Activated T-helper 1 cell treated with anti-CD3 and anti-CD28 coated beads, Interleukin-12 subunit alpha, Interleukin-12 subunit beta, Interleukin-2, Interleukin-4 antibody, amounts not matched to agents 30 ng/mL and 10 ng/mL and 1 ng/mL, durations not matched to agents 14 hours and 24 hours and 36 hours (primary cell): ENCODE measurements at regions of chrX and their contacts with region 1.

Region 1: DNA sequence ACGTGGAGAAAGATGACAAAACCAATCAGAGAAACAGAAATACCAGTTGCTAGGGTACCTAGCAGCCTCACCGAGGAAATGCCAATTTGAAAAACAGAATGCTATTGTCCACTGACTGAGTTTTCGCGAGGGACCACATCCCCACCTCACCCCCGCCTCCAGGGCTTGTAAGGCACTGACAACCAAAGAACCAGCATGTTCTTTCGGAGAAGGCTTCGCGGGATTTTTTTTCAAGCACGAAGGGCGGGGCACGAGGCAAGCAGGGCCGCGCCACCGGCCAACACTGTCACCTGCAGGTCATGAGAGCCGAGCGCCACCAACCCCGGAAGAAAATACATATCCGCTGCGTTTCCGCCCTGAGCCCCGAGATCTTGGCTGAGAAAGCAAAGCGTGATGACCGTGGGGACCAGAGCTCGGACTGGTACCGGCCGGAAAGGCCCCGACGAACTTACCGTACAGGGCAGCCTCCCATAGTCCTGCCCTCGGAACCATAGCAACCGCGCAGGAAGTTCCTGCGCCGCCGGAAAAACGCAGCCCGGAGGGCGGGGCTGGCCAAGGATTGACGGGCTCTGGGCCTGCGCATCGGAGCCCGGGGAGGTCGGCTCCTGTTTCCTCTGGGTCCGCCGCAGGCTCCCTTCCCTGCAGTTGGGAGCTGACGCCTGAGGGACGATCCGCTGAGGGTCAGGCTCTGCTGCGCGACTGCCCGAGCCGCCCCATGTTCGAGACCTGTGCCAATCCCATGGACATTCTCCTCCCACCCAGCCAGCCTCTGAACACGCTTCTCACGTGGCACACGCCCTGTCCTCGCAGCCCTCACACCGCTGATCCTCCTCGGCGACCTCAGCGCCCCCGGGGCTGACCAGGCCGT is 59.2 kb upstream of the PAGE5 start:
- DNase-seq: peak; percentile 83
- H3K4me3 Mint-ChIP-seq: peak overlapping the region; percentile 88
- H3K27ac Mint-ChIP-seq: peak overlapping the region; percentile 96
- H3K4me1 Mint-ChIP-seq: peaks cover 9% of the 10 kb centered on the region
- H3K27me3 Mint-ChIP-seq: peaks cover 8% of the 10 kb centered on the region

Region 2: GRCh38 chrX:54044126-54044876 is 1116.6 kb before region 1 on chrX and contains the start of gene PHF8:
- intact Hi-C with region 1: loop called (anchors 5 kb)
- DNase-seq: peak; percentile 91
- H3K4me3 Mint-ChIP-seq: peak within 1 kb of the TSS; percentile 92
- H3K27ac Mint-ChIP-seq: peak within 1 kb of the TSS; percentile 98
- H3K4me1 Mint-ChIP-seq: peaks cover 18% of the 10 kb centered on the region
- H3K27me3 Mint-ChIP-seq: no peaks in the 10 kb centered on the region
- total RNA-seq, gene PHF8: 50.7 and 54.8 TPM in 2 replicates

Region 3: GRCh38 chrX:54529552-54530357 is 631.2 kb before region 1 on chrX and contains the start of gene GNL3L:
- intact Hi-C with region 1: loop called (anchors 1 kb)
- DNase-seq: peak; percentile 69
- H3K4me3 Mint-ChIP-seq: peak within 1 kb of the TSS; percentile 95
- H3K27ac Mint-ChIP-seq: peak within 1 kb of the TSS; percentile 94
- H3K4me1 Mint-ChIP-seq: peaks cover 26% of the 10 kb centered on the region
- H3K27me3 Mint-ChIP-seq: no peaks in the 10 kb centered on the region
- total RNA-seq, gene GNL3L: 75.5 and 76.1 TPM in 2 replicates

Region 4: GRCh38 chrX:54891573-54891972 is 269.3 kb before region 1 on chrX:
- intact Hi-C with region 1: loop called (anchors 5 kb)
- DNase-seq: peak; percentile 2
- H3K4me3 Mint-ChIP-seq: no peak overlapping the region
- H3K27ac Mint-ChIP-seq: no peak overlapping the region
- H3K4me1 Mint-ChIP-seq: no peaks in the 10 kb centered on the region
- H3K27me3 Mint-ChIP-seq: peaks cover 5% of the 10 kb centered on the region

Region 5: GRCh38 chrX:55717521-55718497 is 556.9 kb after region 1 on chrX and contains the start of gene RRAGB:
- intact Hi-C with region 1: loop called (anchors 1 kb)
- DNase-seq: peak; percentile 84
- H3K4me3 Mint-ChIP-seq: peak within 1 kb of the TSS; percentile 89
- H3K27ac Mint-ChIP-seq: peak within 1 kb of the TSS; percentile 73
- H3K4me1 Mint-ChIP-seq: peaks cover 36% of the 10 kb centered on the region
- H3K27me3 Mint-ChIP-seq: no peaks in the 10 kb centered on the region
- total RNA-seq, gene RRAGB: 4.4 and 6.1 TPM in 2 replicates

Region 6: DNA sequence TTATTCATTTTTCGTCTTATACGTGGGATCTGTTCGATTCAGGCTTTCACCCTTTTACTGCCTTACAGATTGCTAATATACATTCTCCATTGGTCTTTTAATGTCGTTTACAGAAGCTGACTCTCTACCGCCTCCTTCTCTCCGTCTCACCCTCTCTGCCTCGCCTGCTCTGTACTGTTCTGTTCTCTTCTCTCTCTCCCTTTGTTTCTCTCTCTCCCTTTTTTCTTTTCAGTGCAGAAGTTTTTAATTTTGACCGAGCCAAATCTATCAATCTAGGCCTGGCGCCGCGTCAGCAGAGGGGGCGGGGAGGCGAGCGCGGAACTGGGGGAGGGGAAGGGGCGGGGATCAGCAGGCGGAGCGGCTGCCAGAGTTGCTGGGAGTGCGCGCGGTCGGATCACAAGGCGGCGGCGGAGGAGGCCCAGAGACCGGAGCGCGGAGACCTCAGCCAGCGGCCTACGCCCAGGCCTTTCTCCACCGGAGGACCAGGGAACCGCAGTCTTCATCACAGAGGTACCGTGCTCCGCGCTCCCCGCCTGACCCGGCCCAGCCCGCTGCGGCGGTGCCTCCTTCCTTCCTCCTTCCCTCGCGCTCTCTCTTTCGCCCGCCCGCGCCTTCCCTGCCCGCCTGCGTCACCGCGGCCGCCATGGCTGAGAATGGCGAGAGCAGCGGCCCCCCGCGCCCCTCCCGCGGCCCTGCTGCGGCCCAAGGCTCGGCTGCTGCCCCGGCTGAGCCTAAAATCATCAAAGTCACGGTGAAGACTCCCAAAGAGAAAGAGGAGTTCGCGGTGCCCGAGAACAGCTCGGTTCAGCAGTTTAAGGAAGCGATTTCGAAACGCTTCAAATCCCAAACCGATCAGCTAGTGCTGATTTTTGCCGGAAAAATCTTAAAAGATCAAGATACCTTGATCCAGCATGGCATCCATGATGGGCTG is 1402.6 kb after region 1 on chrX and contains the start of gene UBQLN2:
- intact Hi-C with region 1: loop called (anchors 5 kb)
- DNase-seq: peak; percentile 67
- H3K4me3 Mint-ChIP-seq: peak within 1 kb of the TSS; percentile 88
- H3K27ac Mint-ChIP-seq: peak within 1 kb of the TSS; percentile 97
- H3K4me1 Mint-ChIP-seq: peaks cover 12% of the 10 kb centered on the region
- H3K27me3 Mint-ChIP-seq: no peaks in the 10 kb centered on the region
- total RNA-seq, gene UBQLN2: 38.3 and 41.3 TPM in 2 replicates